Calu3 (cell line): ENCODE measurements at regions of chr1 and their contacts with region 1.

Region 1: DNA sequence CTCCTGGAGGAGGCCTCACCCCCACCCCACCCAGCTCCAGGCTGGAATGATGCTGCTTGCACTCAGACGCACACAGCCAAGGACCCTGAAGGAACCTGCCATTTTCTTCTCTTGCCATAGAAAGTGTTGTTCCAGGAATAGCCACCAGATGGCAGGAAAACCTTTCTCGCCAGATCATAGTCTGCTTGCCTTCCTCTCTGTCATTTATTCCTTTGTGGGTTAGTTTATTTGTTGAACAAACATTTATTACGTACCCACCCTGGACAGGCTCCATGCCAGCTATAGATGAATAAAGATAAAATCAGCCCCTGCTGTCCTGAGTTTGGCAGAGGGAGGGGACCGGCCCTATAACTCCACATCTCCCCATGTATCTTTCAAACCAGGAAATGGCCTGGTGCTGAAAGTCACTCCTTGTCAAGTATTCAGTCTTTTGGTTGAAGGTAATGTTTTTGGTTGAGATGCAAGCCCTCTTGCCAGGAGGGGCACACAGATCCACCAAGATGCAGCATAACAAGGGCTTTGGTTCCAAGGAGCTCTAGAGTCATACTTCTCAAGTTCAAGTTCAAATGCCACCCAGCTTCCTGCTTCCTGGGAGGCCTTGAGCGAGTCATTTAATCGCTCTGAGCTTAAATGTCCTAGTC is 7.0 kb upstream of the KCNC4 start:
- DNase-seq: peak; percentile 70
- H3K4me3 Mint-ChIP-seq: no peak overlapping the region
- H3K27ac Mint-ChIP-seq: no peak overlapping the region
- H3K4me1 Mint-ChIP-seq: no peaks in the 10 kb centered on the region
- H3K27me3 Mint-ChIP-seq: peaks cover 8% of the 10 kb centered on the region
- CTCF ChIP-seq: peak; percentile 65

Region 2: GRCh38 chr1:110312188-110313121 is 109.3 kb after region 1 on chr1:
- CTCF ChIA-PET with region 1: interaction called, 93 read pairs
- intact Hi-C with region 1: loop called (anchors 1 kb)
- DNase-seq: peak; percentile 78
- H3K4me3 Mint-ChIP-seq: no peak overlapping the region
- H3K27ac Mint-ChIP-seq: no peak overlapping the region
- H3K4me1 Mint-ChIP-seq: peaks cover 19% of the 10 kb centered on the region
- H3K27me3 Mint-ChIP-seq: no peaks in the 10 kb centered on the region
- CTCF ChIP-seq: peak; percentile 75

Region 3: GRCh38 chr1:110407260-110408210 is 204.4 kb after region 1 on chr1 and contains the start of gene LAMTOR5:
- CTCF ChIA-PET with region 1: no interaction called
- intact Hi-C with region 1: loop called (anchors 5 kb)
- DNase-seq: peak; percentile 87
- H3K4me3 Mint-ChIP-seq: peak within 1 kb of the TSS; percentile 99
- H3K27ac Mint-ChIP-seq: peak within 1 kb of the TSS; percentile 94
- H3K4me1 Mint-ChIP-seq: peaks cover 11% of the 10 kb centered on the region
- H3K27me3 Mint-ChIP-seq: no peaks in the 10 kb centered on the region
- CTCF ChIP-seq: no peak
- total RNA-seq, gene LAMTOR5: 85.6 and 87.4 TPM in 2 replicates

Region 4: GRCh38 chr1:110495926-110496600 is 292.9 kb after region 1 on chr1:
- CTCF ChIA-PET with region 1: interaction called, 13 read pairs
- intact Hi-C with region 1: loop called (anchors 2 kb)
- DNase-seq: peak; percentile 79
- H3K4me3 Mint-ChIP-seq: no peak overlapping the region
- H3K27ac Mint-ChIP-seq: no peak overlapping the region
- H3K4me1 Mint-ChIP-seq: no peaks in the 10 kb centered on the region
- H3K27me3 Mint-ChIP-seq: peaks cover 36% of the 10 kb centered on the region
- CTCF ChIP-seq: peak; percentile 79